ENCODE measurements at regions of chr6 and their contacts with region 1.

Region 1: DNA sequence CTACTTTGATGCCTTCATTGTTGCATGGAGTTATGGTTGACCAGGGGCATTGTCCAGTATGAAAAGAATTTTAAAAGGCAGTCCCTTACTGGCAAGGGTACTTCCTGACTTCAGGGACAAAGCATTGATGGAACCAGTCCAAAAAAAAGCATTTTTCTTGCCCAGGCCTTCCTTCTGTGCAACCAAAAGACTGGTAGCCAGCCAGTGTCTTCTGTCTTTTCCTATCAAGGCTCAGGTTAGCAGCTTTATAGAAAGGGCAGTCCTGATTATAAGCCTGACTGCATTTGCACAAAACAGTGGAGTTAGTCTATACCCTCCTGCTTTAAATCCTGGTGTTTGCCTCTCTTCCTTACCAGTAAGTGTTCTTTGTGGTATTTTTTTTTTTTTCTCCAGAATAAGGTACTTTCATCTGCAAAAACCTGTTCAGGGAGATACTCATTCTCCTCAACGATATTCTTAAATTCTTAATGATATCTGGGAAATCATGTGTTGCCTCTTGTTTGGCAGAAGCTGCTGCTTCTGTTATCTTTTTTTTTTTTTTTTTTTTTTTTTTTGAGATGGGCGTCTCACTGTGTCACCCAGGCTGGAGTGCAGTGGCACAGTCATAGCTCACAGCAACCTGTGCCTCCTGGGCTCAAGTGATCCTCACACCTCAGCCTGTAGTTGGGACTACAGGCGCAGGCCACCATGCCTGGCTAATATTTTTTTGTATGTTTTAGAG is 33.9 kb downstream of the SCAF8 start:
- DNase-seq: no peak
- H3K4me3 ChIP-seq: no peak overlapping the region
- H3K27ac ChIP-seq: no peak overlapping the region
- H3K4me1 ChIP-seq: no peaks in the 10 kb centered on the region
- H3K27me3 ChIP-seq: no peaks in the 10 kb centered on the region
- CTCF ChIP-seq: no peak

Region 2: DNA sequence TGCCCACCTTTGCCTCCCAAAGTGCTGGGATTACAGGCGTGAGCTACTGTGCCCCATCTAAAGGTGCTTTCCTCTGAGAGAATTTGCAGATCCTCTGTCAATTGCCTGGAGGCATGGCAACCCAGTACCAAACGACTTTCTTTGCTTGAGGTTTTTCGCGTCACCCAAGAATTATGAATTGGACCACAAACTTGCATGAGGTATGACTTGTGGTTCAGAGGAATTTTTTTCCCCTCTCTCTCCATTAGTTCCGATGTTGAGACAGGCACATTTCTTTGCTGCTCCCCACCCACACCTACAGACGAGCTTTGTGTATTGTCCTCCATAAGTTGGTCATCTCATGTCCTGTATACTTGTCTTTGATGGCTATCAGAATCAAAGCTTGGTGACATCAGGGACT is 45.7 kb before region 1 on chr6:
- CTCF ChIA-PET with region 1: no interaction called
- dilution Hi-C with region 1: loop called (anchors 5 kb)
- in situ Hi-C with region 1: no loop called
- intact Hi-C with region 1: no loop called
- DNase-seq: peak; percentile 98
- H3K4me3 ChIP-seq: no peak overlapping the region
- H3K27ac ChIP-seq: peak overlapping the region; percentile 32
- H3K4me1 ChIP-seq: peaks cover 6% of the 10 kb centered on the region
- H3K27me3 ChIP-seq: peaks cover 7% of the 10 kb centered on the region
- CTCF ChIP-seq: no peak

Region 3: GRCh38 chr6:154814063-154814462 is 46.9 kb after region 1 on chr6:
- CTCF ChIA-PET with region 1: no interaction called
- dilution Hi-C with region 1: no loop called
- in situ Hi-C with region 1: no loop called
- intact Hi-C with region 1: no loop called
- DNase-seq: no peak
- H3K4me3 ChIP-seq: no peak overlapping the region
- H3K27ac ChIP-seq: no peak overlapping the region
- H3K4me1 ChIP-seq: no peaks in the 10 kb centered on the region
- H3K27me3 ChIP-seq: no peaks in the 10 kb centered on the region
- CTCF ChIP-seq: no peak

Region 4: DNA sequence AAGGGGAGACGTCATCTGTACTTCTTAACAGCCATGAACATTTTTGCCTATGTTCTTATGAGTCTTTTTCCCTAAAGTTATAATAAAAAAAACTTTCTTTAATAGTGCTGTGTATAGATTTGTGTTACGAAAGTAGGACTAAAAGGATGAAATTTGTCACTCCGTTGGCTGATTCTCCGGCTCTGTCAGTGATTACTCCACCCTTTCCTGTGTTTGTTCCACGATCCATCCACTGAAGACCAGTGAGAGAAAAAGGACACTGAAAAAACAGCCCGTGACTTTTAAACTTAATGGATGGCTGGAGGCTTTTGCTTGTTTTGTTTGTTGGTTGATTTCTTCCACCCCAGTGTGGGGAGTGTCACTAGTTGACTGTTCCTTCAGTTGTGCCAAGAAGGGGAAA is 920.5 kb after region 1 on chr6:
- CTCF ChIA-PET with region 1: no interaction called
- dilution Hi-C with region 1: no loop called
- in situ Hi-C with region 1: no loop called
- intact Hi-C with region 1: no loop called
- DNase-seq: no peak
- H3K4me3 ChIP-seq: no peak overlapping the region
- H3K27ac ChIP-seq: no peak overlapping the region
- H3K4me1 ChIP-seq: no peaks in the 10 kb centered on the region
- H3K27me3 ChIP-seq: no peaks in the 10 kb centered on the region
- CTCF ChIP-seq: no peak